PC-9 (cell line): ENCODE measurements at regions of chr3 and their contacts with region 1.

Region 1: GRCh38 chr3:87654184-87654583 is 377.8 kb upstream of the POU1F1 start:
- DNase-seq: no peak
- H3K4me3 ChIP-seq: no peak overlapping the region
- H3K27ac ChIP-seq: no peak overlapping the region
- H3K4me1 ChIP-seq: no peaks in the 10 kb centered on the region
- H3K27me3 ChIP-seq: no peaks in the 10 kb centered on the region
- CTCF ChIP-seq: no peak

Region 2: GRCh38 chr3:87272718-87273341 is 381.4 kb before region 1 on chr3:
- CTCF ChIA-PET with region 1: no interaction called
- POLR2A ChIA-PET with region 1: no interaction called
- intact Hi-C with region 1: loop called (anchors 10 kb)
- DNase-seq: no peak
- H3K4me3 ChIP-seq: no peak overlapping the region
- H3K27ac ChIP-seq: no peak overlapping the region
- H3K4me1 ChIP-seq: no peaks in the 10 kb centered on the region
- H3K27me3 ChIP-seq: no peaks in the 10 kb centered on the region
- CTCF ChIP-seq: no peak

Region 3: DNA sequence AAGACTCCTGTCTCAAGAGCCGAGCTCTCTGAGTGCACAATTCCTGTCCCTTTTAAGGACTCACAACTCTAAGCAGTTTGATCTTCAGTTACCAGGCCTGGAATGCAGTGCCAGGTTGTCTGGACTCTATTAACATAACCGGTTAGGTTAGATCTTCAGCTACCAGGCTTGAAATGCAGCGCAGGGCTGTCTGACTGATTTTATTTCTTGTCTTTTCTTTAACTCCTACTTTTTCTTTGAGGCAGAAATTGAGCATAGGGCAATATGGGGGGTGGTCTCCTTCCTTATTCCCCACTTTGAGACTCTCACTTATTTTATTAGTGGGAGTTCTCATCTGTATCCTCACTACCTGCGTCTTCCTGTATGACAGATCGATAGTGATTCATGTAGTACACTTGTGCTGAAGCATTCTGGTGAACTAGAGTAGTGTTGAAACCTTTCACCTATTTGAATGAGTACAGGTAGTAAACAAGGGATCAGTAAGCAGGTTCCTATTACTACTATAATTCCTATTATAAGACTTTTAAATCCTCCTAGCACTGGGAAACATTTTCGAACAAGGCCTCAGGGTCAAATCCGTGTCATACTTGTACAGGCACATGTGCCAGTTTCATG is 79.7 kb after region 1 on chr3:
- CTCF ChIA-PET with region 1: no interaction called
- POLR2A ChIA-PET with region 1: interaction called, 10 read pairs
- intact Hi-C with region 1: no loop called
- DNase-seq: peak; percentile 53 to 83
- H3K4me3 ChIP-seq: peak overlapping the region; percentile 52
- H3K27ac ChIP-seq: peak overlapping the region; percentile 74
- H3K4me1 ChIP-seq: peaks cover 28% of the 10 kb centered on the region
- H3K27me3 ChIP-seq: no peaks in the 10 kb centered on the region
- CTCF ChIP-seq: no peak